ENCODE measurements at regions of chr7 and their contacts with region 1.

Region 1: DNA sequence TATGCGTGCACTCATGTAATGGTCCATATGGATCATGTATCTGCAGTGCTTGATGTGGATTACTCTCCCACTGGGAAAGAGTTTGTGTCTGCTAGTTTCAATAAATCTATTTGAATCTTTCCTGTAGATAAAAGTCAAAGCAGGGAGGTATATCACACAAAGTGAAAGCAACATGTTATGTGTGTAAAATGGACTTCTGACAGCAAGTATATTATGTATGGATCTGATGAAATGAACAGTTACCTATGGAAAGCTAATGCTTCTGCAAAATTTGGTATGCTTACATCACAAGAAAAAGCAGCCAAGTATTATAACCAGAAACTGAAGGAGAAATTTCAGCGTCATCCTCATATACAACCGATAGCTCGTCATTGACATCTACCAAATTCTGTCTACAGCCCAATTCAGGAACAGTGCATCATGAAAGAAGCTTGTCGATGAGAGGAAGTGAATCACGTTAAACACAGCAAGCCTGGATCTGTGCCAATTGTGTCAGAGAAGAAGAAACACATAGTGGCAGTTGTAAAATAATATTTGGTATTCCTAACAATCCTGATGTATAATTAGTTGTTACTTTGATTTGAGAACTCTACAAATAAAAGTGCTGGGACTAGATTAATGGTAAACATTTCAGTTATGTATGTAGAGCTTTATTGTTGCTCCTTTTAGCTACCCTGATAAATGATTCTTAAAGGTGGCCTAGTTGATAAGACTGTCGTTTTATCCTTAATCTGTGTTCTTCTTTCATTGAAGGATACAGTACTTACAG is 14.2 kb upstream of the SYPL1 start:
- DNase-seq: no peak
- ATAC-seq: peak; percentile 50
- H3K4me3 Mint-ChIP-seq: no peak overlapping the region
- H3K27ac Mint-ChIP-seq: no peak overlapping the region
- H3K4me1 Mint-ChIP-seq: peaks cover 13% of the 10 kb centered on the region
- H3K27me3 Mint-ChIP-seq: no peaks in the 10 kb centered on the region
- CTCF ChIP-seq: no peak

Region 2: DNA sequence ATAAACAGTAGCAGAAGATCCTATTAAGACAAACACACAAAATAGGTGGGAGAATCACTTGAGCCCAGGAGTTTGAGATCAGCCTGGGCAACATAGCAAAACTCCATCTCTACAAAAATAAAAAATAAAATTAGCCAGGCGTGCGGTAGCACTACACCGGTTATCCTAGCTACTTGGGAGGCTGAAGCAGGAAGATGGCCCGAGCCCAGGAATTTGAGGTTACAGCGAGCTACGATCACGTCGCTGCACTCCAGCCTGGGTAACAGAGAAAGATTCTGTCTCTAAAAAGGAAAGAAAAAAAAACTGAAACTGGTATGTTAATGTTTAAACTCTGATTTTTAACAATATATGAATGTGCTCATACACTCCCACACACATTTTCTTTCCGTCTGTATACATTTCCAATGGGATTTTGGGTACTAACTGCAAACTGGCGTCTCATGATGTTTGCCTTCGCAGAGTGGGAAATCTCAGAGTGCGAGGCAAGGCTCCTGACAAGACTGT is 1253.0 kb before region 1 on chr7:
- CTCF ChIA-PET with region 1: no interaction called
- POLR2A ChIA-PET with region 1: no interaction called
- intact Hi-C with region 1: no loop called
- DNase-seq: no peak
- ATAC-seq: no peak
- H3K4me3 Mint-ChIP-seq: no peak overlapping the region
- H3K27ac Mint-ChIP-seq: no peak overlapping the region
- H3K4me1 Mint-ChIP-seq: no peaks in the 10 kb centered on the region
- H3K27me3 Mint-ChIP-seq: peaks cover 2% of the 10 kb centered on the region
- CTCF ChIP-seq: no peak

Region 3: GRCh38 chr7:106143711-106144337 is 17.5 kb after region 1 on chr7:
- CTCF ChIA-PET with region 1: no interaction called
- POLR2A ChIA-PET with region 1: no interaction called
- intact Hi-C with region 1: loop called (anchors 2 kb)
- DNase-seq: no peak
- ATAC-seq: no peak
- H3K4me3 Mint-ChIP-seq: no peak overlapping the region
- H3K27ac Mint-ChIP-seq: no peak overlapping the region
- H3K4me1 Mint-ChIP-seq: peaks cover 6% of the 10 kb centered on the region
- H3K27me3 Mint-ChIP-seq: no peaks in the 10 kb centered on the region
- CTCF ChIP-seq: no peak

Measured in activated B cell treated with CpG ODN at 0.5 μM for 24 hours (primary cell).